ENCODE measurements at regions of chr12 and their contacts with region 1.

Region 1: DNA sequence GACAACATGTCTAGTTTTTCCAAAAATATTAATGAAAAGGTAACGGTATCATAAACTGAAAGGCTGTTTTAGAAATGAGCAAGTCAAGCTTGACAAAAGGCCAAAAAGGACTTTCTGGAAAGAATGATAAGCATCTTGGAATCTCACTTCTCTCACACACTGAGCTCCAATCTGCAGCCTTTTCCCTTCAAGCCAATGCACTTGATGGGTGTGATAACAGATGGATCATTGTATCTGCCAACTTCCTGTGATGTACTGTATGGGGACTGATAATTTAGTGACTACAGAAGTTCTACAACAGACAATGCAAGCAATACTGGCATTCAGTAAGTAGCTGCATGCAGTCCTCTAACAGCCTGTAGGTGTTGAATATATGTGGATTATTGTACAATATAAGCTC is 147.1 kb downstream of the MED13L start:
- DNase-seq: no peak
- H3K4me3 ChIP-seq: no peak overlapping the region
- H3K27ac ChIP-seq: no peak overlapping the region
- H3K27me3 ChIP-seq: no peaks in the 10 kb centered on the region
- CTCF ChIP-seq: no peak

Region 2: DNA sequence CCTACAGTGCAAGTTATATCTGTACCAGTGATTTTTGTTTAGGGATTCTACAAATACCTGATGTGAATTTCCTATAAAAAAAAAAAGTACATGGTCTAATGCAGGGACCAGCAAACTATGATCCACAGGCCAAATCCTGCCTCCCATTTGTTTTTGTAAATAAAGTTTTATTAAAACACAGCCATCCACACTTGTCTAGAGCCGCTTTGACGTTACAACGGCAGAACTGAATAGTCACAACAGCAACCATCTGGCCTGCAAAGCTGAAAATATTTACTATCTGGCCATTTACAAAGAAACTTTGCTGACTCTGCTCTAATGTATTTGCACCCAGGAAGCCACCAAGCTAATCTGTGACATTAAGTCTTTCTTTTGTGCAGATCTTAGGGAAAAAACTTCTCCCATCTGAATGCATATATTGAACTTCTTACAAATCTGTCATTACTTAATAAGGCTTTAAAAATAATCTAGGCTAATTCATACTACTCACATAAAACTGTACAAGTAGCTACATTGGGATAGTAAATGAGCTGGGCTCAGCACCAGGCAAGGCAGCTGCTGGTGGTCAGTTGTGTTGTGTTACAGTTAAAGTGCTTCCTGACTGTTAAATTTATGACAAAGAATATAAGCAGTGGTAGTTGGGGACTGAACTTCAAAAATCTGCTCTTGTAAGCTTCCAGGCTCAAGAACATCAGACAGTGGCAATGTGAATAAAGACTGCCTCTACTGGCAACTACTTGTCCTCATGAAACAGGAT is 156.3 kb before region 1 on chr12:
- CTCF ChIA-PET with region 1: no interaction called
- POLR2A ChIA-PET with region 1: no interaction called
- DNase-seq: no peak
- H3K4me3 ChIP-seq: no peak overlapping the region
- H3K27ac ChIP-seq: no peak overlapping the region
- H3K27me3 ChIP-seq: no peaks in the 10 kb centered on the region
- CTCF ChIP-seq: no peak

Region 3: GRCh38 chr12:116266168-116266601 is 135.8 kb after region 1 on chr12:
- CTCF ChIA-PET with region 1: interaction called, 13 read pairs
- POLR2A ChIA-PET with region 1: interaction called, 4 read pairs
- DNase-seq: no peak
- H3K4me3 ChIP-seq: no peak overlapping the region
- H3K27ac ChIP-seq: no peak overlapping the region
- H3K27me3 ChIP-seq: no peaks in the 10 kb centered on the region
- CTCF ChIP-seq: 0 out of 2 replicates have a peak, but pooled peaks have one; percentile 14

Measured in AG04450 (cell line).